ENCODE measurements at regions of chr9 and their contacts with region 1.

Region 1: DNA sequence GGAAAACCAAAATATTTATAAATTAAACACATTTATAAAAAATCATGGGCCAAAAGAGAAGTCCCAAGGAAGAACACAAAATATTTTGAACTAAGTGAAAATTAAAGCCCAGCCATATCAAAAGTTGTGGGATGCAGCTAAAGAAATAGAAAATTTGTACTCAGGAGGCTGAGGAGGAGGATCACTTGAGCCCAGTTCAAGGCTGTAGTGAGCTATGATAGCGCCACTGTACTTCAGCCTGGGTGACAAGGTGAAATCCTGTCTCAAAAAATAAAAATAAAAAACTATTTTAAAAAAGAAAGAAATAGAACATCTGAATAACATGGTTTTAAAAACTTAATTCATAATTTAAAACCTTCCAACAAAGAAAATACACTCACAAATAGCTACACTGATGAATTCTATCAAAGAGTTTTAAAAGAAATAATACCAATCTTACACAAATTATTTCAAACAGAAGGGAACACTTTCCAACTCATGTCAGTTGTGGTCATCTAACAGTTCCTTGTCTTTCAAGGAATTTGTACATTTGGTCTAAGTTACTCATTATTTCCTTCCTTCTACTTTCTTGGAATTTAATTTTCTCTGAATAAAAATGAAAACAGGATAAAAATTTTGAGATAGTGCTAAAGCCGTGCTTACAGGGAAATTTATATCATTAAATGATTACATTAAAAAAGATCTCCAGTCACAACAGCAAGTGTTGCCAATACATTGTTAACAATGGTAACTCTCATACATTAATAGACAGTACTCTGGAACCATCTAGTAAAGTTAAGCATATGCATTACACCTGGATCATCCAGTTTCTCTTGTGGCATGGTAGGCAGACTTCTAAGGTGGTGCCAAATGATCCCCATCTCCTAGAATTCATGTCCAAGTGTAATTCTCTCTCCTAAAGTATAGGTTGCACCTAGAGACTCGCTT is 17.8 kb downstream of the PTBP3 start:
- DNase-seq: no peak
- H3K4me3 ChIP-seq: no peak overlapping the region
- H3K27ac ChIP-seq: no peak overlapping the region
- H3K4me1 ChIP-seq: peaks cover 0 to 22% (median 10%) of the 10 kb centered on the region in 4 donors
- H3K27me3 ChIP-seq: no peaks in the 10 kb centered on the region
- CTCF ChIP-seq: no peak
- EP300 ChIP-seq: no peak
- POLR2A ChIP-seq: no peak

Region 2: DNA sequence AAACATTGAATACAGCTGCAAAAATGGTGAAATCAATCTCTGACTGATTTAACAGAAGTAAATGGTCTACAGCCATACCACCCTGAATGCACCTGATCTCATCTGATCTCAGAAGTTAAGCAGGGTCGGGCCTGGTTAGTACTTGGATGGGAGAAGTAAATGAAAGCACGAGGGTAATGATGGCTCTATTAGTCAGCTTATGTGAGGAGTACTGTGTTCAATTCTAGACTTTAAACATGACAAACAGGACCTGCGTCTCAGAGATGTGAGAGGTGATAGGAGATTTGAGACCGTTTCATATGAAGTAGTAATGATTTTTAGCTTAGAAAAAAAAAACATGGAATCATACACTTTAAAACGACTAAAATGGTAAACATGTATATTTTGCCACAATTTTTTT is 63.4 kb before region 1 on chr9:
- intact Hi-C with region 1: loop called (anchors 10 kb)
- DNase-seq: no peak
- H3K4me3 ChIP-seq: no peak overlapping the region
- H3K27ac ChIP-seq: no peak overlapping the region
- H3K4me1 ChIP-seq: no peaks in the 10 kb centered on the region
- H3K27me3 ChIP-seq: no peaks in the 10 kb centered on the region
- CTCF ChIP-seq: no peak
- EP300 ChIP-seq: no peak
- POLR2A ChIP-seq: no peak

Measured in esophagus muscularis mucosa (tissue), 4 donors.